Activated T-helper 2 cell treated with anti-CD3 and anti-CD28 coated beads, Interferon-gamma antibody, Interleukin-2, Interleukin-4, amounts not matched to agents 10 μg/mL and 5 μg/mL and 100 μg/mL, durations not matched to agents 14 hours and 24 hours and 36 hours (primary cell): ENCODE measurements at regions of chr17 and their contacts with region 1.

Region 1: DNA sequence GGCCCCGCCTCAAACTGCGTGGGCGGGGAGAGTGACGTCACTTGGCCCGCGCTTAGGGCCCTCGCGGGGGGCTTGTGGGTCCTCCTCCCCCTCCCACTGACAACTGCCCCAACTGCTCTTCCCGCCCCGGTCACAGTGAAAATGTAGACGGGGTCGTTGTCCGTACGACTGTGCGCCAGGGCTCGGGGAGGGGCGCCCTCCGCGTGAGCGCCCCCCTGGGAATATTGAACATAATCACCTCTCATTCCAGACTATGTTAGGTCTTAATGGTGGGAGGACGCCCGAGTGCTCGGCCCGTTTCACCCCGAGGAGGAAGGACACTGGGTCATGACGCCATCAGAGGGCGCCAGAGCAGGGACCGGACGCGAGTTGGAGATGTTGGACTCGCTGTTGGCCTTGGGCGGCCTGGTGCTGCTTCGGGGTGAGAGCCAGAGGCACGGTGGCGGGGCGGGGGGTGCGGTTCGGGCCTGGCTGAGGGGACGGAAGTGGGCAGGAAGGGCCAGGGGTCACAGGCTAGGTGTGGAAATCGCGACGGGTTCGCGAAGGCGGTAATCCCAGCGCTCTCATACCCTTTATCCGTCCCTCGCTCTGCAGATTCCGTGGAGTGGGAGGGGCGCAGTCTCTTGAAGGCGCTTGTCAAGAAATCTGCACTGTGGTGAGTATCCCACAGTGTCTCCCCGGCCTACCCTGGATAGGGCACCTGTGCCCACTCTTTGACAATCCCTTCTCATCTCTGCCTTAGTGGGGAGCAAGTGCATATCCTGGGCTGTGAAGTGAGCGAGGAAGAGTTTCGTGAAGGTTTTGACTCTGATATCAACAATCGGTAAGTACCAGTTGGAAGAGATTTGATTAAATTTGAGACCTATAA is at the start of gene ELP5:
- DNase-seq: peak; percentile 88
- H3K4me3 Mint-ChIP-seq: peak within 1 kb of the TSS; percentile 92
- H3K27ac Mint-ChIP-seq: peak within 1 kb of the TSS; percentile 98
- H3K4me1 Mint-ChIP-seq: peaks cover 33% of the 10 kb centered on the region
- H3K27me3 Mint-ChIP-seq: no peaks in the 10 kb centered on the region
- total RNA-seq, gene ELP5: 64.8 and 65.3 TPM in 2 replicates

Region 2: DNA sequence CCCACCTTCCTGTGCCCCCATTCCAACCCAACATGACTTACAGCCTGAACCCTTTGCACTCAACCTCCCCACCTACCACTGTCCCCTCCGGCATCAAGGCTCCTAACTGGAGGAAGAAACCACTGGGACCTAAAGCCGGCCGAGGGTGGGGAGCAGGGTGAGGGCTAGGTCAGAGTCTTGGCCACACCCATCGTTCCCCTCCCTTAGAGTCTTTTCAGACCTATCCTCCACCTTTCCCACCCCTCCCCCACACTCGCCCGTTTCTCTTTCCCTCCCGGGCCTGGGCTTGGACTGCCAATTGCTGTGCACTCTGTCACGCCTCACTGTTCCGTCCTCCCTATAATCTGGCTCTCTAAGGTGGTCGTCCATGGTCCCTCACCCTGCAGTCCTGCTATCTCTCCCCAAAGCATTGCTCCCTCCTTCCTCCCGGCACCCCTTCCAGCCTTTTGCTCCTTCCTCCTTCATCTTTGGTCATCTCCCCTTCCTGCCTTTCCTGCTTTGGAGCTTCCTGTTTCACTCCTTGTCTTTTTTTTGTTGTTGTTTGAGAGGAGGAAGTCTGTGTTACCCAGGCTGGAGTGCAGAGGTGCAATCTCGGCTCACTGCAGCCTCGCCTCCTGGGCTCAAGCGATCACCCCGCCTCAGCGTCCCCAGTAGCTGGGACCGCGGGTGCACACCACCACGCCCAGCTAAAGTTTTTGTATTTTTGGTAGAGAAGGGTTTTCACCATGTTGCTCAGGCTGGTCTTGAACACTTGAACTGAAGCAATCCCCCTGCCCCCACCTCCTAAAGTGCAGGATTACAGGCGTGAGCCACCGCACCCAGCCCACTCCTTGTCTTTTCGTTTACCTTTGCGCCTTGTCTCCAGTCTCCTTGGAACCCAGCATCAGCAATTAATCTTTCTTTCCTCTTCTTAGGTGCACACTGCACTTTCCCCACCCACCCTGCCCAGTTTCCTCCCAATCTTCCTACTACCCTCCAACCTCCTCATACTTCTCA is 11.0 kb after region 1 on chr17:
- intact Hi-C with region 1: no loop called
- DNase-seq: no peak
- H3K4me3 Mint-ChIP-seq: peak overlapping the region; percentile 47
- H3K27ac Mint-ChIP-seq: no peak overlapping the region
- H3K4me1 Mint-ChIP-seq: peaks cover 16% of the 10 kb centered on the region
- H3K27me3 Mint-ChIP-seq: peaks cover 29% of the 10 kb centered on the region

Region 3: GRCh38 chr17:7280519-7281429 is 28.4 kb after region 1 on chr17:
- intact Hi-C with region 1: loop called (anchors 1 kb)
- DNase-seq: peak; percentile 69
- H3K4me3 Mint-ChIP-seq: peak overlapping the region; percentile 78
- H3K27ac Mint-ChIP-seq: peak overlapping the region; percentile 42
- H3K4me1 Mint-ChIP-seq: peaks cover 15% of the 10 kb centered on the region
- H3K27me3 Mint-ChIP-seq: peaks cover 36% of the 10 kb centered on the region